GM12878 (cell line): ENCODE measurements at regions of chr20 and their contacts with region 1.

Region 1: GRCh38 chr20:38395165-38395564 is 40.0 kb downstream of the SNHG17 start:
- DNase-seq: no peak
- ATAC-seq: no peak
- H3K4me3 ChIP-seq: no peak overlapping the region
- H3K27ac ChIP-seq: no peak overlapping the region
- H3K4me1 ChIP-seq: no peaks in the 10 kb centered on the region
- H3K27me3 ChIP-seq: no peaks in the 10 kb centered on the region; a peak in 1 of 4 replicates
- CTCF ChIP-seq: no peak
- EP300 ChIP-seq: no peak
- POLR2A ChIP-seq: no peak
- RAD21 ChIP-seq: no peak

Region 2: GRCh38 chr20:38321959-38322598 is 73.1 kb before region 1 on chr20:
- CTCF ChIA-PET with region 1: no interaction called
- POLR2A ChIA-PET with region 1: no interaction called
- RAD21 ChIA-PET with region 1: no interaction called
- SMC1A ChIA-PET with region 1: no interaction called
- in situ Hi-C with region 1: no loop called
- intact Hi-C with region 1: no loop called
- DNase-seq: no peak
- ATAC-seq: no peak
- H3K4me3 ChIP-seq: no peak overlapping the region
- H3K27ac ChIP-seq: no peak overlapping the region
- H3K4me1 ChIP-seq: no peaks in the 10 kb centered on the region
- H3K27me3 ChIP-seq: no peaks in the 10 kb centered on the region; a peak in 1 of 4 replicates
- CTCF ChIP-seq: peak; percentile 22 to 39 (median 31); a peak in 4 of 6 replicates
- EP300 ChIP-seq: no peak
- POLR2A ChIP-seq: no peak
- RAD21 ChIP-seq: peak; percentile 40

Region 3: DNA sequence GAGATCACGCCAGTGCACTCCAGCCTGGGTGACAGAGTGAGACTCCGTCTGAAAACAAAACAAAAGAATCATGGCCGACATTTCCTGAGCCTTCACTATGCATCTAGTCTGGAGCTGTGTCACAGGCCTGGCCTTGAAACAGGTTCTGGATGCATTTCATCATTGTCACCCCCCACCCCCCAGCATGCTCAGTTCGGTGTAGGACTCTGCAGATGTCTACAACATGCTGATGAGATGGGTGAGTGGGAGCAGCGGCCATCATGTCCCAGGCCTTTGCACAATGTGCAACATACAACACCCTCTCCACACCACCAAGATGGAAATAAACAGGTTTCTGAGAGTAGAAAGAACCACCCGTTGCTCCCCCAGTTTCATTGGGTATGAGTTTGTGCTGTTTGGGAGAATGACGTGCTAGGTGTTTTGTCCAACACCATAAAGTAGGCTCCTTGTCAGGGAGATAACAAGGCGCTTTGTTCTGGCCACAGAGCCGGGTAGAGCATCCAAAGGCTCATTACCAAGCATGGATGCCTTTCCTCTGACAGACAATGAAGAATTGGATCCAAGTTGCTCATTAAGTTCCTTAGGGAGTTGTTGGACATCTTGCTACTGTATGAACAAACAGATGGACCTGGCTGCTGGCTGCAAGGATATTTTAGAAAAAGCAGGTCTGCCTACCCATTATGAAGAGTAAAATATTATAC is 17.9 kb after region 1 on chr20:
- CTCF ChIA-PET with region 1: interaction called, 11 read pairs
- POLR2A ChIA-PET with region 1: no interaction called
- RAD21 ChIA-PET with region 1: no interaction called
- SMC1A ChIA-PET with region 1: interaction called, 3 read pairs
- in situ Hi-C with region 1: no loop called
- intact Hi-C with region 1: no loop called
- DNase-seq: no peak
- ATAC-seq: no peak
- H3K4me3 ChIP-seq: no peak overlapping the region
- H3K27ac ChIP-seq: no peak overlapping the region
- H3K4me1 ChIP-seq: no peaks in the 10 kb centered on the region
- H3K27me3 ChIP-seq: no peaks in the 10 kb centered on the region
- CTCF ChIP-seq: no peak
- EP300 ChIP-seq: no peak
- POLR2A ChIP-seq: no peak
- RAD21 ChIP-seq: no peak